ENCODE measurements at regions of chr10 and their contacts with region 1.

Region 1: GRCh38 chr10:73743905-73744663 is at the start of gene SEC24C:
- DNase-seq: peak; percentile 98
- ATAC-seq: peak; percentile 87
- H3K4me3 Mint-ChIP-seq: peak within 1 kb of the TSS; percentile 95
- H3K27ac Mint-ChIP-seq: peak within 1 kb of the TSS; percentile 100
- H3K4me1 Mint-ChIP-seq: peaks cover 42% of the 10 kb centered on the region
- H3K27me3 Mint-ChIP-seq: no peaks in the 10 kb centered on the region
- total RNA-seq, gene SEC24C: 84.6 to 88.2 TPM

Region 2: GRCh38 chr10:73167783-73168464 is 576.2 kb before region 1 on chr10 and contains the starts of genes ECD and FAM149B1:
- CTCF ChIA-PET with region 1: no interaction called
- POLR2A ChIA-PET with region 1: no interaction called
- intact Hi-C with region 1: loop called in 1 of 2 experiments (anchors 1 kb)
- DNase-seq: peak; percentile 96
- ATAC-seq: peak; percentile 94
- H3K4me3 Mint-ChIP-seq: peak within 1 kb of the TSS; percentile 100
- H3K27ac Mint-ChIP-seq: peak within 1 kb of the TSS; percentile 100
- H3K4me1 Mint-ChIP-seq: peaks cover 37% of the 10 kb centered on the region
- H3K27me3 Mint-ChIP-seq: no peaks in the 10 kb centered on the region
- total RNA-seq, gene ECD: 41.0 to 50.7 TPM
- total RNA-seq, gene FAM149B1: 16.0 to 18.6 TPM

Region 3: DNA sequence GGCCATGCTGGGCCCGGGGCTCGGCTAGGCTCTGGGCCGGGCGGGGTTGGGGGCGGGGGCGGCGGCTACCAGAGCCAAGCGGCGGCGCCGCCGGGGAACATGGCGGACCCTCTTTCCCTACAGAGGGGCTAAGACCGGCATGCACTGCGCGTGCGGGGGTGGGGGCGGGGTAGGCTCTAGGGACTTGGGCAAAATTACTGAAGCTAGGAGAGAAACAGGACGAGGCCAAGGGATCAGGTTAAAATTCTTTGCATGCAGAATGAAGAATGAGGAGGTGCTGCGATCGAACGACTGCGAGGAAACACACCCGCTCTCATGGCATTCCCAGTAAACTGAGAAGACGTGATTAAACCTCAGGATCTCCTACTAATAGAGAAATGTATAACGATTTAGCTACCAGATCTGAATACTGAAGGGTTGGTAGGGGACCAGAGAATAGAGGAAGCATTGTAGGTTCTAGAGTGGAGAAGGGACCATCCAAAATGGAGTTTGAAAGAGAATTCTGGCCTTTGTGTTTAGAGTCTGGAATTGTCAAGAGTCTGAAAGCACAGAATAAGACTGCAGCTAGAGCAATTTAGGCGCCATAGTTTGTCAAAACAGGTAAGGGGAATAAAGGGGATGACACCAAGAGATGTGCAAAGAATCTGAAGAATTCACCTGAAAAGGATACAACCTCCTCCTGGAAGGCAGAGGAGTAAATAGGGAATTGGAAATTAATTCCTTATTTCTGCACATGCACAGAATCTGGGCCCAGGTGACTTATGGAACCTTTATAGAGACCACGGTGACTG is 248.0 kb before region 1 on chr10 and contains the start of gene PPP3CB:
- CTCF ChIA-PET with region 1: no interaction called
- POLR2A ChIA-PET with region 1: no interaction called
- intact Hi-C with region 1: loop called in 1 of 2 experiments (anchors 1 kb)
- DNase-seq: peak; percentile 96
- ATAC-seq: peak; percentile 81
- H3K4me3 Mint-ChIP-seq: peak within 1 kb of the TSS; percentile 91
- H3K27ac Mint-ChIP-seq: peak within 1 kb of the TSS; percentile 99
- H3K4me1 Mint-ChIP-seq: peaks cover 45% of the 10 kb centered on the region
- H3K27me3 Mint-ChIP-seq: no peaks in the 10 kb centered on the region
- total RNA-seq, gene PPP3CB: 42.3 to 45.3 TPM

Region 4: DNA sequence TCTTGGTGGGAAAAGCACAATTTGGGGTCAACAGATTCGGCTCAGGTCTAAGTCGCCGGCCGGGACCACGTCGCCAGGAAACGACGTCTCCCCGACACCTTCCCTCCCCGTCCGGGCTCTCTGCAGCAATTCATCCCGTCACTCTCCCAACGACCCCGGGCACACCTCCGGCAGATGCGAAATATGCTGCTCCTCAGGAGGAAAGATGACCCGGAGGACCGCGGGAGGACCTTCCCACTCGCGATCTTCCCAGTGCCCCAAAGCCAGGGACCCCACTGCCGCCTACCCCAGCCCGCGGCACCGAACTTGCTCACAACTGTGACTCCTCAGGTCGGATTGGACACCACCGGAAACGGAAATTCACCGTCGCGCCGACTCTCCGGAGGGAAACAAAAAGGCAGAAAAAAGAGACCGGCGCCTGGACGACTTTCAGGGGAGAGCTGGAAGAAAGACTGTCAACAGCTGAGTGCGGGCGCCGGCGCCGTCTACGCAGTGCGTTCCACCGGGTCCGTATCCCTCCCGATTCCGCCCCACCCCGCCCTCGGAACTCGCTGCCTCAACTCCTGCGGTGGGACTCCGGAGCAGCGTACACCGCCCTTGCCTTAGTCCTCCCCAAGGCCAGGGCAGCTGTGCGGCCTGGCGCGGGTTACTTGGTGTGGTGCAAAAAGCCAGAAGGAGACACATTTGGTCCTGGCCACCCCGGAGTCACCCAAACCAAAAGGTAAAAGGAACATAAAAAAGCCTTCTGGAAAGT is 13.8 kb before region 1 on chr10:
- CTCF ChIA-PET with region 1: interaction called, 9 read pairs
- POLR2A ChIA-PET with region 1: interaction called, 28 read pairs
- intact Hi-C with region 1: loop called (anchors 1 kb)
- DNase-seq: peak; percentile 95
- ATAC-seq: peak; percentile 93
- H3K4me3 Mint-ChIP-seq: peak overlapping the region; percentile 98
- H3K27ac Mint-ChIP-seq: peak overlapping the region; percentile 97
- H3K4me1 Mint-ChIP-seq: peaks cover 9% of the 10 kb centered on the region
- H3K27me3 Mint-ChIP-seq: no peaks in the 10 kb centered on the region

Region 5: DNA sequence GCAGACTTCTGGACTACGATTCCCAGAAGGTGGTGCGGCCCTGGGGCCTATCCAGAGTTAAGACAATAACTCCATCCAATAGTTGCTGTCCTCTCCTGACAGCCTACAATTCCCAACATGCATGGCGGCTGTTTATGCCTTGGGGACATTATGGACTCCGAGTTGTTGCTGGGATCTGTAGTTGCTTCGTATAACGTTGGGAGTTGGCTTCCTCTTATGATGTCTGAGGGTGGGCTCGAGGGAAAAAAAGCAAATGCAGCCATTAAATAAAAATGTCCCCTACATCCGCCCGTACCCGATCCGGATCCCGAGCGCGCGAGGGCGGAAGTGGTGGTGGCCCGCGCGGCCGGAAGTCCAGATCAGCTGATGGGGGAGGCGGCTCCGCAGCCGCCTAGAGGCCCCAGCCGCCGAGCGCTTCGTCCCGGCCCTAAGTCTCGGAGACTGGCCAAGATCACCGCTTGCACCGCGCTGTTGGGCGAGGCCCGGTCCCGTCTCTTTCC is 41.2 kb after region 1 on chr10 and contains the start of gene ZSWIM8:
- CTCF ChIA-PET with region 1: interaction called, 6 read pairs
- POLR2A ChIA-PET with region 1: no interaction called
- intact Hi-C with region 1: loop called (anchors 1 kb)
- DNase-seq: peak; percentile 90
- ATAC-seq: peak; percentile 85
- H3K4me3 Mint-ChIP-seq: peak within 1 kb of the TSS; percentile 83
- H3K27ac Mint-ChIP-seq: peak within 1 kb of the TSS; percentile 98
- H3K4me1 Mint-ChIP-seq: peaks cover 46% of the 10 kb centered on the region
- H3K27me3 Mint-ChIP-seq: no peaks in the 10 kb centered on the region
- total RNA-seq, gene ZSWIM8: 40.1 to 67.3 TPM

Region 6: GRCh38 chr10:73879296-73880173 is 135.5 kb after region 1 on chr10:
- CTCF ChIA-PET with region 1: interaction called, 5 read pairs
- POLR2A ChIA-PET with region 1: no interaction called
- intact Hi-C with region 1: loop called in 1 of 2 experiments (anchors 1 kb)
- DNase-seq: peak; percentile 98
- ATAC-seq: peak; percentile 86
- H3K4me3 Mint-ChIP-seq: no peak overlapping the region
- H3K27ac Mint-ChIP-seq: peak overlapping the region; percentile 71
- H3K4me1 Mint-ChIP-seq: peaks cover 45% of the 10 kb centered on the region
- H3K27me3 Mint-ChIP-seq: no peaks in the 10 kb centered on the region

Region 7: DNA sequence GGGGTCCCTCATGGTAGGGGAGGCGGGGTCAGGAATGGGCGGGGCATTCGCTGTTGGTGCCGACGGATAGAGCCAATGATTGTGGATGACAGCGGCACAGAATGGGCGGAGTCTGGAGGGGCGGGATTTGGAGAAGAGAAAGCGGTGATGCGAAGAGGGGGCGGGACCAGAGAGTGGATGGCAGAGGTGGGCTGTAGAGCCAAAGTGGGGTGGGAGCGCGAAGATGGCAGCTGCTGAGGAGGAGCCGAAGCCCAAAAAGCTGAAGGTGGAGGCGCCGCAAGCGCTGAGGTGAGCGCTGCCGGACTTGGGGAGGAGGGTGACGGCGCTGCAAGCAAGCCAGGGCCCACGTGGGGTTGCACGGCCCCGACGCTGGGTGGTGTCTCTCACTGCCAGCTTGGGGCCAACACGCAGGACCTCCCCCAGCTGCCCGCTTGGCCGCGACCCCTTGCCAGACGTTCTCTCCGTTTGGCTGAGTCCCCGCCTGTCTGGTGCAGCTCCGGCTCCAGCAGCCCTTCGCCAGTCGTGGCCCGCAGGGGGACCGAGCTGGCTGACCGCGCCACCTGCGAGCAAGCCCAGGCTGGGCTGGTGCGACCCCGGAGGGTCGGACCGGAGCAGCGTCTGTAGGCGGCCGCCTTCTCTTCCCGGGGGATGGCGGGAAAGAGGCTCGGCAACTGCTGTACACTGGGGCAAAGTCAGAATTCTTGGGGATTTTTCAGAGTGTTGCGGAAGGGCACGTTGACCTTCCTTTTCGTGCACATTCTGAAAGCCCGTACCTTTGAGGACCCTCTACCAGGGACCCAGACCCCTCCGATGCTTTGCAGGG is 407.2 kb after region 1 on chr10 and contains the start of gene ADK:
- CTCF ChIA-PET with region 1: no interaction called
- POLR2A ChIA-PET with region 1: no interaction called
- intact Hi-C with region 1: loop called in 1 of 2 experiments (anchors 1 kb)
- DNase-seq: peak; percentile 100
- ATAC-seq: peak; percentile 97
- H3K4me3 Mint-ChIP-seq: no peak within 1 kb of the TSS
- H3K27ac Mint-ChIP-seq: peak within 1 kb of the TSS; percentile 85
- H3K4me1 Mint-ChIP-seq: peaks cover 45% of the 10 kb centered on the region
- H3K27me3 Mint-ChIP-seq: no peaks in the 10 kb centered on the region
- total RNA-seq, gene ADK: 53.7 to 55.0 TPM

Measured in activated CD4-positive, alpha-beta T cell treated with anti-CD3 and anti-CD28 coated beads for 36 hours (primary cell).